Activated B cell treated with CpG ODN at 0.5 μM for 24 hours (primary cell): ENCODE measurements at regions of chr6 and their contacts with region 1.

Region 1: GRCh38 chr6:16514249-16514648 is 247.0 kb downstream of the ATXN1 start:
- DNase-seq: no peak
- ATAC-seq: peak; percentile 56
- H3K4me3 Mint-ChIP-seq: no peak overlapping the region
- H3K27ac Mint-ChIP-seq: peak overlapping the region; percentile 14
- H3K4me1 Mint-ChIP-seq: peaks cover 46% of the 10 kb centered on the region
- H3K27me3 Mint-ChIP-seq: no peaks in the 10 kb centered on the region
- CTCF ChIP-seq: no peak

Region 2: GRCh38 chr6:16409531-16410441 is 104.5 kb before region 1 on chr6:
- CTCF ChIA-PET with region 1: interaction called, 19 read pairs
- POLR2A ChIA-PET with region 1: interaction called, 4 read pairs
- intact Hi-C with region 1: no loop called
- DNase-seq: peak; percentile 32
- ATAC-seq: peak; percentile 60
- H3K4me3 Mint-ChIP-seq: peak overlapping the region; percentile 63
- H3K27ac Mint-ChIP-seq: peak overlapping the region; percentile 37
- H3K4me1 Mint-ChIP-seq: peaks cover 66% of the 10 kb centered on the region
- H3K27me3 Mint-ChIP-seq: no peaks in the 10 kb centered on the region
- CTCF ChIP-seq: no peak

Region 3: GRCh38 chr6:16471222-16471909 is 42.9 kb before region 1 on chr6:
- CTCF ChIA-PET with region 1: interaction called, 14 read pairs
- POLR2A ChIA-PET with region 1: interaction called, 5 read pairs
- intact Hi-C with region 1: no loop called
- DNase-seq: peak; percentile 22
- ATAC-seq: peak; percentile 81
- H3K4me3 Mint-ChIP-seq: peak overlapping the region; percentile 28
- H3K27ac Mint-ChIP-seq: peak overlapping the region; percentile 88
- H3K4me1 Mint-ChIP-seq: peaks cover 69% of the 10 kb centered on the region
- H3K27me3 Mint-ChIP-seq: no peaks in the 10 kb centered on the region
- CTCF ChIP-seq: no peak

Region 4: DNA sequence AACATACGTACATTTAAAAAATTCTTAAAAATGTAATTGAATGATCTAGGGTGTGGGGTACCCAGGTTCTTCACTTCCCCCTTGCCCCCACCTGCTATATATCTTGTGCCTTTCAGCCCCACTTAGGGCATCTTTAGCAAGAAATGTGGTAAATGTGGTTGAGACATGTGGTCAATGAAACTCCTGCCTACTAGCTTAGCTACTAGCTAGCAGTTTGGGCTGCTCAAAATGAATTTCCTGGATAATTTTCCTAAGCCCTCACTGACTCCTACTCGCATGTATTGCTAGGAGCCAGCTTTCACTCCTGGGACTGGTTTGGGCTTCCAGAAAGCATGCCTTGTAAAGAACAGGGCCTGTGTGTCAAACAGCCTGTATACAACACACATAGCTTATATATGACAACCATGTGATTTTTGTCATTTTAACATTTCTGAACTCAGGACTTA is 10.3 kb before region 1 on chr6:
- CTCF ChIA-PET with region 1: interaction called, 13 read pairs
- POLR2A ChIA-PET with region 1: interaction called, 9 read pairs
- intact Hi-C with region 1: no loop called
- DNase-seq: no peak
- ATAC-seq: peak; percentile 75
- H3K4me3 Mint-ChIP-seq: peak overlapping the region; percentile 46
- H3K27ac Mint-ChIP-seq: peak overlapping the region; percentile 80
- H3K4me1 Mint-ChIP-seq: peaks cover 42% of the 10 kb centered on the region
- H3K27me3 Mint-ChIP-seq: no peaks in the 10 kb centered on the region
- CTCF ChIP-seq: no peak

Region 5: DNA sequence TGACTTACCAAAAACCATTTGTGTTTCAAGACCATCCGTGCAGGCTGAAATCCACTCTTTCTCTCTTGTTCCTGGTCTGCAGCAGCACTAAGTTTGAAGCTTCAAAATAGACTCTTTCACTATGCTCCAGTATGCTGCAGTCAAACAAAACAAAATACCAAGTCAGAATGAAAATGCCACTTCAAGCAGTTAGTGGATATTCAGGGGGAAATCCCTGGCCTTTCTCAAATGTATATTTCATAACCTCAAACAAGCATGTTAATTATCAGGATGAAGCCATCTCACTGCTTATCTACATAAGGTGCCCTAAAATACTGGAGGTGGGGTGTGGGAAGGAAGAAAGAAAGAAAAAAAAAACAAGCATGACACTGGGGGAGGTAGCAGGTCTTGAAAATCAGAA is 143.5 kb after region 1 on chr6:
- CTCF ChIA-PET with region 1: interaction called, 3 read pairs
- POLR2A ChIA-PET with region 1: no interaction called
- intact Hi-C with region 1: loop called (anchors 5 kb)
- DNase-seq: no peak
- ATAC-seq: peak; percentile 57
- H3K4me3 Mint-ChIP-seq: peak overlapping the region; percentile 45
- H3K27ac Mint-ChIP-seq: no peak overlapping the region
- H3K4me1 Mint-ChIP-seq: peaks cover 36% of the 10 kb centered on the region
- H3K27me3 Mint-ChIP-seq: no peaks in the 10 kb centered on the region
- CTCF ChIP-seq: no peak

Region 6: GRCh38 chr6:16712931-16713484 is 198.8 kb after region 1 on chr6:
- CTCF ChIA-PET with region 1: interaction called, 15 read pairs
- POLR2A ChIA-PET with region 1: interaction called, 8 read pairs
- intact Hi-C with region 1: loop called (anchors 1 kb)
- DNase-seq: no peak
- ATAC-seq: peak; percentile 54
- H3K4me3 Mint-ChIP-seq: peak overlapping the region; percentile 75
- H3K27ac Mint-ChIP-seq: peak overlapping the region; percentile 94
- H3K4me1 Mint-ChIP-seq: peaks cover 28% of the 10 kb centered on the region
- H3K27me3 Mint-ChIP-seq: no peaks in the 10 kb centered on the region
- CTCF ChIP-seq: no peak

Region 7: DNA sequence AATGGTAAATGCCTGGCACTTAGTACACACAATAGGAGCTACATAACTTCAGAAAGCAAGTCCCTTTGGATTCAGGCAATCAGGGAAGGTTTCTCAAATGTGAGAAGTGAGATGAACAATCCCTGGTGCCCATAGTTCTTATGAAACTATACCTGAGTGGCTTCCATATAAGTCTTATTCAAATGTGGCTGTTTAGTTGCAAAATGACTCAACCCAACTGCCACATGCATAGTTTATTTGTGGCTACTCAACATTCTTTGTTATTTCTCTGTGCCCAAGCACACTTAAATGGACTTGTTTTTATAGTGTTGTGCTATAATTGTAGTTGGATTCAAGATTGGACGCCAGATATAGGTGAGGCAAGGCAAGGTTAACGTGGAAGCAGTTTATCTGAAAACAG is 340.7 kb after region 1 on chr6:
- CTCF ChIA-PET with region 1: no interaction called
- POLR2A ChIA-PET with region 1: no interaction called
- intact Hi-C with region 1: no loop called
- DNase-seq: no peak
- ATAC-seq: no peak
- H3K4me3 Mint-ChIP-seq: no peak overlapping the region
- H3K27ac Mint-ChIP-seq: no peak overlapping the region
- H3K4me1 Mint-ChIP-seq: no peaks in the 10 kb centered on the region
- H3K27me3 Mint-ChIP-seq: peaks cover 12% of the 10 kb centered on the region
- CTCF ChIP-seq: no peak

Region 8: GRCh38 chr6:16964553-16965501 is 450.6 kb after region 1 on chr6:
- CTCF ChIA-PET with region 1: no interaction called
- POLR2A ChIA-PET with region 1: no interaction called
- intact Hi-C with region 1: loop called (anchors 5 kb)
- DNase-seq: peak; percentile 15
- ATAC-seq: peak; percentile 54
- H3K4me3 Mint-ChIP-seq: no peak overlapping the region
- H3K27ac Mint-ChIP-seq: no peak overlapping the region
- H3K4me1 Mint-ChIP-seq: peaks cover 3% of the 10 kb centered on the region
- H3K27me3 Mint-ChIP-seq: peaks cover 12% of the 10 kb centered on the region
- CTCF ChIP-seq: no peak